Heart right ventricle (tissue), 16 donors: ENCODE measurements at regions of chr16 and their contacts with region 1.

Region 1: GRCh38 chr16:85234310-85235204 is 122.3 kb upstream of the CIBAR2 start:
- DNase-seq: peak; percentile 65 to 76
- ATAC-seq: peak; percentile 37 to 83 (median 70)
- H3K4me3 ChIP-seq: peak overlapping the region in 9 of 10 donors; percentile 20 to 52 (median 46)
- H3K27ac ChIP-seq: peak overlapping the region in 8 of 10 donors; percentile 43 to 75 (median 53)
- H3K4me1 ChIP-seq: peaks cover 23 to 66% (median 46%) of the 10 kb centered on the region in 9 donors
- H3K27me3 ChIP-seq: peaks cover 0 to 29% (median 0%) of the 10 kb centered on the region in 7 donors
- CTCF ChIP-seq: peak in 1 of 9 donors; percentile 9

Region 2: GRCh38 chr16:85126705-85127419 is 107.7 kb before region 1 on chr16:
- intact Hi-C with region 1: loop called in 3 of 10 experiments (anchors 5 to 10 kb)
- DNase-seq: no peak
- ATAC-seq: peak in 6 of 8 donors; percentile 16 to 44 (median 28)
- H3K4me3 ChIP-seq: no peak overlapping the region
- H3K27ac ChIP-seq: peak overlapping the region in 6 of 10 donors; percentile 46 to 86 (median 61)
- H3K4me1 ChIP-seq: peaks cover 28 to 68% (median 54%) of the 10 kb centered on the region in 9 donors
- H3K27me3 ChIP-seq: no peaks in the 10 kb centered on the region
- CTCF ChIP-seq: no peak

Region 3: GRCh38 chr16:85137323-85138072 is 97.1 kb before region 1 on chr16:
- intact Hi-C with region 1: loop called in 2 of 10 experiments (anchors 5 to 10 kb)
- DNase-seq: peak; percentile 93 to 96
- ATAC-seq: peak; percentile 88 to 95 (median 93)
- H3K4me3 ChIP-seq: peak overlapping the region in 9 of 10 donors; percentile 28 to 49 (median 43)
- H3K27ac ChIP-seq: peak overlapping the region; percentile 38 to 88 (median 84)
- H3K4me1 ChIP-seq: peaks cover 30 to 63% (median 44%) of the 10 kb centered on the region in 9 donors
- H3K27me3 ChIP-seq: no peaks in the 10 kb centered on the region
- CTCF ChIP-seq: no peak

Region 4: GRCh38 chr16:85172455-85173145 is 62.0 kb before region 1 on chr16:
- intact Hi-C with region 1: loop called in 2 of 10 experiments (anchors 10 kb)
- DNase-seq: peak in 1 of 2 donors; percentile 47
- ATAC-seq: peak in 7 of 8 donors; percentile 16 to 56 (median 51)
- H3K4me3 ChIP-seq: peak overlapping the region in 9 of 10 donors; percentile 21 to 58 (median 37)
- H3K27ac ChIP-seq: peak overlapping the region in 8 of 10 donors; percentile 14 to 57 (median 28)
- H3K4me1 ChIP-seq: peaks cover 5 to 86% (median 78%) of the 10 kb centered on the region in 9 donors
- H3K27me3 ChIP-seq: peaks cover 0 to 56% (median 0%) of the 10 kb centered on the region in 7 donors
- CTCF ChIP-seq: peak in 7 of 9 donors; percentile 35 to 62 (median 43)